ACHN (cell line): ENCODE measurements at regions of chr2 and their contacts with region 1.

Region 1: GRCh38 chr2:102251042-102251848 is 60.1 kb upstream of the IL1RL1 start:
- DNase-seq: no peak

Region 2: DNA sequence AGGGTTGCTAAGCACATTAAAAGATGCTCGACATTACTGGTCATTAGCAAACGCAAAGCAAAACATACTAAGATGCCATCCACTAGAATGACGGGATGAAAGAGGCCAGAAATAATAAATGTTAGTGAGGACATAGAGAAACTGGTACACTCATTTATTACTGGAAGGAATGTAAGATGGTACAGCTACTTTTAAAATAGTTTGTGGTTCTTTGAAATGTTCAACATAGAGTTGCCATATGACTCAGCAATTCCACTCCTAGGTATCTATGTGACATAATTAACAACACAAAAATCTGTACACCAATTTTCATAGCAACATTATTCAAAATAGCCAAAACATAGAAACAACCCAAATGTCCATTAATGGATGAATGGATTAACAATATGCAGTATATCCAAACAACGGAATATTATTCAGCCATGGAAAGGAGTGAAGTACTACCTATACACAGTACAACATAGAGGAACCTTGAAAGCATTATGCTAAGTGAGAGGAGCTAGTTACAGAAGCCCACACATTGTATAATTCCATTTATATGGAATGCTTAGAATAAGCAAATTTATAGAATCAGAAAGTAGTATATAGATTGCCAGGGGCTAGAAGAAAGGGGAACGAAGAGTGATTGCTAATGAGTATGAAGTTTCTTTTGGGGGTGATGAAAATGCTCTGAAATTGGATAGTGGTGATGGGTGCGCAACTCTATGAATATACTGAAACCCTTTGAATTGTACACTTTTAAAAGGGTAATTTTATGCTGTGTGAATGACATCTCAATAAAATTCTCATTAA is 170.6 kb before region 1 on chr2:
- in situ Hi-C with region 1: no loop called
- DNase-seq: no peak

Region 3: GRCh38 chr2:102355526-102356380 is 104.5 kb after region 1 on chr2 and contains the start of gene IL18R1:
- in situ Hi-C with region 1: loop called (anchors 25 kb)
- DNase-seq: peak; percentile 78

Region 4: GRCh38 chr2:102967451-102967850 is 716.2 kb after region 1 on chr2:
- in situ Hi-C with region 1: no loop called
- DNase-seq: peak; percentile 44